ENCODE measurements at regions of chr12 and their contacts with region 1.

Region 1: DNA sequence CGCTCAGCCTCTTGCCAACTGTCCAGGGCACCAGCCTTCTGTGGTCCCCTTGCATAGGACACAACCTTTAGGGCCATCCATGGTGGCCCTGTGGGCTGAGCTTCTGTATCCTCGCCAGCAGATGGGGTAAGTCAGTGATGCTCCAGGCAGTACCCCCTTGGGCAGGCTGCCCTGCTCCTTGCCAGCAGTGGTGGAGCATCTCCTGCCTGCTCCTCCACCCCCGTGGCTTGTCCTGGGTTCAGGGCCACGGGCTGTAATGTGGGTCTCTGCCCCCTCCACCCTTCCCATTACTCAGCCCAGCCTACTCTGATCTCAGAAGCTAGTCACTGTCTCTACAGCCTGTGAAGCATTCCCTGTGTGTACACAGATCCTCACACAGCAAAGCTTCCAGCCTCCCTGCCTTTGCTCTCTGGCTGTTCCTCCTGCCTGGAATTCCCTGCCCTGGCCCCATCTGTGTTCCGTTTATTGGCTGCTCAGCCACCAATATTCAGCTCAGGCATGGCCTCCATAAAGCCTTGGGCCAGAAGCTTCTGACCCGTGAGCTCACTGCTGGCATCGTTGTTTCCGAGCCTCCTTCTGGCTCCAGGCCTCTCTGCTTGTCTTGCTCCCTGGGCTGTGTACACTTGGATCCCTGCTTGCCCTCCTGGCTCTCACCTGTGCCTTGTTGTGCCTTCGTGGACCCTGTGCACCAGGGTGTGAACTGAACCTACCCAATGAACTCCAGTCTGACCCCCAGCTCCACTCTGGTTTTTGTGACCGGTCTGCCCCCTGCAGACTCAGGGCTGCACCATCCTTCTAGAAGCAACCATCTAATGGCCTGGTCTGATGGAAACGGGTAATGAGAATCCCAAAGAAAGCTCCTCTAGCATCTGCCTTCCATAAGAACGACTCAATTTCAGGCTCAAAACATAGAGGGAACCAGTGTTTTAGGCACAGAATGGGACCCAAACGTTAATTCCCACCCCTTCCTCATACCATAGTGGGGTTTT is 177.0 kb upstream of the PRMT8 start:
- DNase-seq: peak; percentile 20
- H3K4me3 ChIP-seq: no peak overlapping the region
- H3K27ac ChIP-seq: no peak overlapping the region
- H3K4me1 ChIP-seq: peaks cover 4% of the 10 kb centered on the region
- H3K27me3 ChIP-seq: peaks cover 0 to 1% of the 10 kb centered on the region in 2 experiments
- CTCF ChIP-seq: peak; percentile 10 to 62
- POLR2A ChIP-seq: no peak

Region 2: GRCh38 chr12:3770886-3771285 is 456.9 kb after region 1 on chr12:
- CTCF ChIA-PET with region 1: interaction called, 16 read pairs
- POLR2A ChIA-PET with region 1: no interaction called
- dilution Hi-C with region 1: no loop called
- intact Hi-C with region 1: no loop called
- DNase-seq: peak; percentile 41
- H3K4me3 ChIP-seq: no peak overlapping the region
- H3K27ac ChIP-seq: no peak overlapping the region
- H3K4me1 ChIP-seq: peaks cover 8% of the 10 kb centered on the region
- H3K27me3 ChIP-seq: peaks cover 8% of the 10 kb centered on the region in 2 experiments
- CTCF ChIP-seq: no peak
- POLR2A ChIP-seq: no peak